B cell (primary cell): ENCODE measurements at regions of chr19 and their contacts with region 1.

Region 1: DNA sequence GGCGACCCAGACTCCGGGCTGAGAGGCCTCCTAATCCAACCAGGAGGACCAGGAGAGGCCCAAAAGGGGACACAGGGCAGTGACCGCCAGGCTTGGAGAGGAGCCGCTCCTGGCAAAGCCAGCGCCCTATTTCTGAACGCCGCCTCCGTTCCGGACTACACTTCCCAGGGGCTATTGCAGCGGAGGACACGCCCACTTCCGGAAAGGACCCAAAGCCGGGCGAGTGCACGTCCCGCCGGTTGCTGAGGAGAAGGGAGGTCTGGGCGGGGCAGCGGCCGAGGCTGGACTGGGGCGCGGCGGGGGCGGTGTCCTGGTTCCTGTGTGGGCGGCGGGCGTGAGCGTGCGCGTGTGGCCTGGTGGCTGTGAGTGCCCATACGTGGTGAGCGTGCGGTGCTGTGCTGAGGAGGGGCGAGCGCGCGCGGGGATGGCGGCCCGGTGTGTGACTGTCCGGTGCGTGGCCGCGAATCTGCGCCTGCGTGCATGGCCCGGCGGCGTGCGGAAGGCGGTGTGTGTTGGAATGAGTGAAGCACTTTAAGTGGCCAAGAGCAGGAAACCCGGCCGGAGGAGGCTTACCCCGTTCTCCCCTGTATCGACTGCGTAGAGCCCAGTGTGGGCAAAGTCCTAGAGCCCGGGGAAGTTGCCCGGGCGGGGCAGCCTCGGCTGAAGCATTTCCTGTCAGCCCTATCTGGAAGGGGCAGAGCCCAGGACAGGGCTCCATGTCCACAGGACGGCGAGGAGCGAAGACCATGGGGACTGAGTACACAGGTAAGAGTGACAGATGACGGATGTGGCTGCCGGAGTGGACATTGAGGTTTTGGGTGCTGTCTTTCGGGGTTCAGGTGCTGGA is at the start of gene ZNF470:
- DNase-seq: peak; percentile 90
- ATAC-seq: peak; percentile 98
- H3K4me3 ChIP-seq: peak within 1 kb of the TSS; percentile 68 to 97 (median 91)
- H3K4me3 Mint-ChIP-seq: peak within 1 kb of the TSS; percentile 100
- H3K27ac ChIP-seq: peak within 1 kb of the TSS; percentile 50 to 68
- H3K27ac Mint-ChIP-seq: peak within 1 kb of the TSS; percentile 98
- H3K4me1 ChIP-seq: peaks cover 9 to 12% of the 10 kb centered on the region in 2 donors
- H3K4me1 Mint-ChIP-seq: peaks cover 17% of the 10 kb centered on the region
- H3K27me3 ChIP-seq: no peaks in the 10 kb centered on the region
- H3K27me3 Mint-ChIP-seq: no peaks in the 10 kb centered on the region
- CTCF ChIP-seq: no peak
- total RNA-seq, gene ZNF470: 6.9 and 11.9 TPM in 2 replicates

Region 2: GRCh38 chr19:56507446-56508289 is 59.8 kb before region 1 on chr19 and contains the start of gene ZNF471:
- CTCF ChIA-PET with region 1: no interaction called
- POLR2A ChIA-PET with region 1: no interaction called
- intact Hi-C with region 1: loop called (anchors 1 kb)
- DNase-seq: peak; percentile 95
- ATAC-seq: peak; percentile 99
- H3K4me3 ChIP-seq: peak within 1 kb of the TSS; percentile 55 to 77 (median 67)
- H3K4me3 Mint-ChIP-seq: no peak within 1 kb of the TSS
- H3K27ac ChIP-seq: peak within 1 kb of the TSS; percentile 89 to 97
- H3K27ac Mint-ChIP-seq: no peak within 1 kb of the TSS
- H3K4me1 ChIP-seq: peaks cover 10 to 13% of the 10 kb centered on the region in 2 donors
- H3K4me1 Mint-ChIP-seq: peaks cover 9% of the 10 kb centered on the region
- H3K27me3 ChIP-seq: no peaks in the 10 kb centered on the region
- H3K27me3 Mint-ChIP-seq: no peaks in the 10 kb centered on the region
- CTCF ChIP-seq: no peak
- total RNA-seq, gene ZNF471: 4.7 and 5.9 TPM in 2 replicates

Region 3: GRCh38 chr19:56538254-56538760 is 29.2 kb before region 1 on chr19:
- CTCF ChIA-PET with region 1: no interaction called
- POLR2A ChIA-PET with region 1: no interaction called
- intact Hi-C with region 1: loop called (anchors 1 kb)
- DNase-seq: peak; percentile 96
- ATAC-seq: peak; percentile 89
- H3K4me3 ChIP-seq: peak overlapping the region; percentile 39 to 84 (median 69)
- H3K4me3 Mint-ChIP-seq: peak overlapping the region; percentile 93
- H3K27ac ChIP-seq: peak overlapping the region; percentile 80 to 83
- H3K27ac Mint-ChIP-seq: peak overlapping the region; percentile 99
- H3K4me1 ChIP-seq: peaks cover 6 to 17% of the 10 kb centered on the region in 2 donors
- H3K4me1 Mint-ChIP-seq: peaks cover 19% of the 10 kb centered on the region
- H3K27me3 ChIP-seq: no peaks in the 10 kb centered on the region
- H3K27me3 Mint-ChIP-seq: no peaks in the 10 kb centered on the region
- CTCF ChIP-seq: no peak

Region 4: DNA sequence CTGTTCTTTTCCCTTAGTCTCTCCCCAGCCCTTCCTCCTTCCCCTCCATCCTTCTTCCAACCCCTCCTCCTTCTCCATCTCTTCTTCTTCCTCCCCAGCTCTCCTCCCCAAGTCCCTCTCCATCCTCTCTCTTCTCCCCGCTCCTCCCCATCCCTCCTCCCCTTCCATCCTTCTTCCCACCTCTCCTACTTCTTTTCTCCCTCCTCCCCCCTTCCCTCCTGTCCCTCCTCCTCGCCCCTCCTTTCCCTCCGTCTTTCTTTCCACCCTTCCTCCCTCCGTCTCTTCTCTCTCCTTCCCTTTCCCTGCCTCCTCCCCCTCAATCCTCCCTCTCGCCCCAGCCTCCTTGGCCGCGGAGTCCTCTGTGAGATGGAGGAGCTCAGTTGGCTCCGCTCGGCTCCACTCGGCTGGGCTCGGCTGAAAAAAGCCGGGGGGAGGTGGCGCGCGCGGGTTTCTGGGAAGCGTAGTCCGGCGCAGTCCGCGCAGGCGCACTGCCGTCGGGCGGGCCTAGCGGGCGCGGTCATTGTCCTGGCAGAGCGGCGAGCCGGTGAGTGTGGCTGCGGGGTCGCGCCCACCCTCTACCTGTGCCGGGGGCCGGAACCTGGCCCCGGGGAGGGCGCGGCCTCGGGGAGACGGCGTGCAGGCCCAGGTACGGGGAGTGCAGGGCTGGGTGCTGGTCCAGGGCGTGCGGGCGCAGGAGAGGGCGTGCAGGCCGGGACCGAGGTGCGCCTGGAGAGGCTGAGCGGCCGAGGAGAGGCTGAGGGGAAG is 27.5 kb after region 1 on chr19 and contains the start of gene ZNF71:
- CTCF ChIA-PET with region 1: no interaction called
- POLR2A ChIA-PET with region 1: no interaction called
- intact Hi-C with region 1: loop called (anchors 1 kb)
- DNase-seq: peak; percentile 89
- ATAC-seq: peak; percentile 94
- H3K4me3 ChIP-seq: peak within 1 kb of the TSS; percentile 22 to 88 (median 68)
- H3K4me3 Mint-ChIP-seq: peak within 1 kb of the TSS; percentile 93
- H3K27ac ChIP-seq: peak within 1 kb of the TSS; percentile 49 to 88
- H3K27ac Mint-ChIP-seq: peak within 1 kb of the TSS; percentile 90
- H3K4me1 ChIP-seq: peaks cover 11 to 20% of the 10 kb centered on the region in 2 donors
- H3K4me1 Mint-ChIP-seq: peaks cover 19% of the 10 kb centered on the region
- H3K27me3 ChIP-seq: peaks cover 0 to 4% (median 0%) of the 10 kb centered on the region in 4 experiments
- H3K27me3 Mint-ChIP-seq: no peaks in the 10 kb centered on the region
- CTCF ChIP-seq: no peak
- total RNA-seq, gene ZNF71: 9.0 and 9.3 TPM in 2 replicates

Region 5: DNA sequence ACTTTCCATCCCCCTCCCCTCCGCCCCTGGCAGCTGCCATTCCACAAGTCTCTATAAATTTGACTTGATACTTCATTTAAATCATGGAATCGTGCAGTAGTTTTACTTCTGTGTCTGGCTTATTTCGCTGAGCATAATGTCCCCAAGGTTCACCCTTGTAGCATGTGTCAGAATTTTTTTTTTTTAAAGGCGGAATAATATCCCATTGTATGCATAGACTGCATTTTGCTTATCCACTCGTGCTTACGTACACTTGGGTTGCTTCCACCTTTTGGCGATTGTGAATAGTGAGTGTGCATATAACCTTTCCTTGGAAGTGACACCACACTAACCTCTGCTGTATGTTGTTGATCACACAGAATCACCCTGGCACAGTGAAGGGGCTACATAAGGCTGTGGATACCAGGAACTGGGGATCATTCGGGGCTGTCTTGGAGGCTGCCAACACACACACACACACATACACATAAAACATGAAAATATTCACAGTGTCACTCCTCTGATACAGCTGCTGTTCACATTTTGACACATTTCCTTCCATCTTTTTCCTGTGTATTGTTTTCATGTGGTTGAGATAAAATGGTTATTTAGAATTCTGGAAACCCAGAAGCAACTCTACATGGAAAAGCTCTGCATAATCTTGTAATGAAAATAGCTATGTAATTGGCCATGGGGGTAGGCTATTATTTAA is 40.9 kb after region 1 on chr19:
- CTCF ChIA-PET with region 1: no interaction called
- POLR2A ChIA-PET with region 1: no interaction called
- intact Hi-C with region 1: no loop called
- DNase-seq: no peak
- ATAC-seq: no peak
- H3K4me3 ChIP-seq: no peak overlapping the region
- H3K4me3 Mint-ChIP-seq: no peak overlapping the region
- H3K27ac ChIP-seq: no peak overlapping the region
- H3K27ac Mint-ChIP-seq: no peak overlapping the region
- H3K4me1 ChIP-seq: no peaks in the 10 kb centered on the region
- H3K4me1 Mint-ChIP-seq: no peaks in the 10 kb centered on the region
- H3K27me3 ChIP-seq: no peaks in the 10 kb centered on the region
- H3K27me3 Mint-ChIP-seq: no peaks in the 10 kb centered on the region
- CTCF ChIP-seq: no peak

Region 6: GRCh38 chr19:56633021-56633420 is 65.5 kb after region 1 on chr19:
- CTCF ChIA-PET with region 1: no interaction called
- POLR2A ChIA-PET with region 1: no interaction called
- intact Hi-C with region 1: no loop called
- DNase-seq: no peak
- ATAC-seq: no peak
- H3K4me3 ChIP-seq: no peak overlapping the region
- H3K4me3 Mint-ChIP-seq: no peak overlapping the region
- H3K27ac ChIP-seq: no peak overlapping the region
- H3K27ac Mint-ChIP-seq: no peak overlapping the region
- H3K4me1 ChIP-seq: no peaks in the 10 kb centered on the region
- H3K4me1 Mint-ChIP-seq: no peaks in the 10 kb centered on the region
- H3K27me3 ChIP-seq: no peaks in the 10 kb centered on the region
- H3K27me3 Mint-ChIP-seq: no peaks in the 10 kb centered on the region
- CTCF ChIP-seq: no peak

Region 7: GRCh38 chr19:56671613-56671994 is 104.1 kb after region 1 on chr19 and contains the start of gene ZNF835:
- CTCF ChIA-PET with region 1: no interaction called
- POLR2A ChIA-PET with region 1: no interaction called
- intact Hi-C with region 1: loop called (anchors 1 kb)
- DNase-seq: peak; percentile 92
- ATAC-seq: peak; percentile 98
- H3K4me3 ChIP-seq: peak within 1 kb of the TSS; percentile 27 to 83 (median 72)
- H3K4me3 Mint-ChIP-seq: peak within 1 kb of the TSS; percentile 98
- H3K27ac ChIP-seq: no peak within 1 kb of the TSS
- H3K27ac Mint-ChIP-seq: peak within 1 kb of the TSS; percentile 89
- H3K4me1 ChIP-seq: peaks cover 9 to 18% of the 10 kb centered on the region in 2 donors
- H3K4me1 Mint-ChIP-seq: peaks cover 14% of the 10 kb centered on the region
- H3K27me3 ChIP-seq: no peaks in the 10 kb centered on the region
- H3K27me3 Mint-ChIP-seq: no peaks in the 10 kb centered on the region
- CTCF ChIP-seq: peak; percentile 33
- total RNA-seq, gene ZNF835: 7.0 and 10.1 TPM in 2 replicates